Naive thymus-derived CD4-positive, alpha-beta T cell (primary cell): ENCODE measurements at regions of chr11 and their contacts with region 1.

Region 1: DNA sequence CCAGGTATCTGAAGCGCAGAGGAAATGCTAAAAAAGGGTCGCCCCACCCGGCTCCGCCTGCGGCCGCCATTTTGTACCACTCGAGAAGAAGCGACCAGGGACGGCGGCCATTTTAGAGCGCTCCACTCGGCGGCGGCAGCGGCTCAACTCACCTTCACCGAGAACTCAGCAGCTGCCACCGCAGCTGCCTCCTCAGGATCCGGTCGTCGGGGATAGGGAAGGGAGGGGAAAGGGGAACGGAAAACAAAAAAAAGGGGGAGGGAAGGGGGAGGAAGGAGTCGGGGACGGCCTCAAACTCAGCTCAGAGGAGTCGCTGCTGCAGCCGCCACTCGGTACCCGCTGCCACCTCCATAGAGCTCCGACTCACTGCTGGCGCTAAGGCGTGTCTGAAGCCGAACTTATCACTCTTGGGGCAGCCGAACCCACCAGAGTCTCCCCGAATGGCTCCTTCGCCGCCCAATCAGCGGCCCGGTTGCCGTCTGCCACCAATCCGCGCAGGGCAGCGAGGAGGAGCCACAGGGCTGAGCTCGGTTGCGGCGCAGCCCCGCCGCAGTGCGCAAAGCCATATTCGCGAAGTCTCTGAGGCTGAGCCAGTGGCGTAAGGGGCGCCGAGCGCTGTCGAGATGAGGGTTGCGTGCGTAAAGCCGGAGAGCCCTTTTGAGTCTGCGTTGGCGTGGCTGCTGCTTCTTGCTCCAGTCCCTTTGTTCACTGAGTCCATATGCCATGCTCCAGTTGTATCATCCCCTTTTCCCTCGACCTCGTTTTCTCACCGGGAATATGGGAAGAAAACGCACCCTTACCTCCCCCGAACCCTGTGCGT is at the start of gene EIF4G2:
- DNase-seq: peak; percentile 97 to 99 (median 99)
- ATAC-seq: peak; percentile 95
- H3K4me3 ChIP-seq: peak within 1 kb of the TSS; percentile 98
- H3K4me3 Mint-ChIP-seq: peak within 1 kb of the TSS; percentile 93 to 98 (median 97)
- H3K27ac ChIP-seq: peak within 1 kb of the TSS; percentile 95
- H3K27ac Mint-ChIP-seq: peak within 1 kb of the TSS; percentile 95 to 99 (median 98)
- H3K4me1 ChIP-seq: peaks cover 29 to 37% of the 10 kb centered on the region in 2 donors
- H3K4me1 Mint-ChIP-seq: peaks cover 25 to 53% (median 43%) of the 10 kb centered on the region in 7 donors
- H3K27me3 ChIP-seq: no peaks in the 10 kb centered on the region
- H3K27me3 Mint-ChIP-seq: peaks cover 0 to 5% (median 0%) of the 10 kb centered on the region in 5 donors
- total RNA-seq, gene EIF4G2: 596 to 843 (median 720) TPM

Region 2: GRCh38 chr11:10455637-10456487 is 352.9 kb before region 1 on chr11:
- CTCF ChIA-PET with region 1: no interaction called
- POLR2A ChIA-PET with region 1: interaction called, 10 read pairs
- intact Hi-C with region 1: loop called (anchors 2 to 5 kb)
- DNase-seq: peak; percentile 45 to 85 (median 77)
- ATAC-seq: peak; percentile 71
- H3K4me3 ChIP-seq: peak overlapping the region; percentile 55
- H3K4me3 Mint-ChIP-seq: peak overlapping the region; percentile 78 to 96 (median 92)
- H3K27ac ChIP-seq: peak overlapping the region; percentile 75
- H3K27ac Mint-ChIP-seq: peak overlapping the region; percentile 87 to 98 (median 94)
- H3K4me1 ChIP-seq: peaks cover 62 to 67% of the 10 kb centered on the region in 2 donors
- H3K4me1 Mint-ChIP-seq: peaks cover 72 to 92% (median 90%) of the 10 kb centered on the region in 7 donors
- H3K27me3 ChIP-seq: no peaks in the 10 kb centered on the region
- H3K27me3 Mint-ChIP-seq: peaks cover 0 to 9% (median 0%) of the 10 kb centered on the region in 5 donors

Region 3: GRCh38 chr11:10792398-10792975 is 16.3 kb before region 1 on chr11:
- CTCF ChIA-PET with region 1: interaction called, 18 read pairs
- POLR2A ChIA-PET with region 1: interaction called, 88 read pairs
- intact Hi-C with region 1: loop called (anchors 1 kb)
- DNase-seq: peak; percentile 58 to 90 (median 77)
- ATAC-seq: peak; percentile 89
- H3K4me3 ChIP-seq: peak overlapping the region; percentile 40
- H3K4me3 Mint-ChIP-seq: peak overlapping the region in 6 of 10 donors; percentile 1 to 37 (median 16)
- H3K27ac ChIP-seq: no peak overlapping the region
- H3K27ac Mint-ChIP-seq: peak overlapping the region in 2 of 9 donors; percentile 15 to 24
- H3K4me1 ChIP-seq: peaks cover 4 to 20% of the 10 kb centered on the region in 2 donors
- H3K4me1 Mint-ChIP-seq: peaks cover 14 to 26% (median 23%) of the 10 kb centered on the region in 7 donors
- H3K27me3 ChIP-seq: no peaks in the 10 kb centered on the region
- H3K27me3 Mint-ChIP-seq: peaks cover 0 to 23% (median 8%) of the 10 kb centered on the region in 5 donors

Region 4: GRCh38 chr11:10838083-10838482 is 29.3 kb after region 1 on chr11:
- CTCF ChIA-PET with region 1: interaction called, 6 read pairs
- POLR2A ChIA-PET with region 1: interaction called, 49 read pairs
- intact Hi-C with region 1: no loop called
- DNase-seq: no peak
- ATAC-seq: no peak
- H3K4me3 ChIP-seq: no peak overlapping the region
- H3K4me3 Mint-ChIP-seq: no peak overlapping the region
- H3K27ac ChIP-seq: no peak overlapping the region
- H3K27ac Mint-ChIP-seq: no peak overlapping the region
- H3K4me1 ChIP-seq: no peaks in the 10 kb centered on the region
- H3K4me1 Mint-ChIP-seq: peaks cover 3 to 9% (median 5%) of the 10 kb centered on the region in 7 donors
- H3K27me3 ChIP-seq: no peaks in the 10 kb centered on the region
- H3K27me3 Mint-ChIP-seq: no peaks in the 10 kb centered on the region

Region 5: DNA sequence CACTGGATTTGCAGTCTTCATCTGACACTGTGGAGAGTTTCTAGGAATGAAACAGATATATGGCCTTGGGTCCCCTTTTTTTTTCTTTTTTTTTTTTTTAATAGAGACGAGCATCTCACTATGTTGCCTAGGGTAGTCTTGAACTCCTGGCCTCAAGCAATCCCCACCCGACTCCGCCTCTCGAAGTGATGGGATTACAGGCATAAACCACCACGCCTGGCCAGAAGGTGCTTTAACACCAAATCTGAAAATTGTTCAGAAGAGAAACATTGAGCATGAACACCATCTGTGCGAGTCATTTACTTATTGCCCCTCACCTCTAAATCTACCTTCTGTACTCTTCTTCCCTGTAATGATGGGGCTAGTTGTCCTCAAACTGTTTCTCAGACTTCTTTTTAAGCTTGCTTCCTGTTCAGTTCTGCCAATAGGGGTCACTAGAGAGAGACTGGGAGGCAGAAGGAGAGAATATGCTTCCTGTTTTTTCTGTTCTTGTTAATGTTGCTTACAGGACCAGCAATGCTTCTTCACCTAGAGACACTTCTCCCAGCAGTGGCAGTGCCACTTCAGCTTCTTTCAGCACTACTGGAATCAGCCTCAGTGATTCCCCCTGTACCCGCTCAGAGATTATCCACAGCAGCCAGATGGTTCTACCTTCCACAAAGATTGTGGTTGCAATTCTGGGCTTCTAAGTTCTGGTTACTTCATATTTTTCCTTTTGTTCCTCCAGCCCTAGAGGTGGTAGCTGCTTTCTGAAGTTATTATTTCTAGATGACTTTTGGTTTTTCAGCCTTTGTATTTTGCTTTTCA is 69.8 kb after region 1 on chr11:
- CTCF ChIA-PET with region 1: interaction called, 4 read pairs
- POLR2A ChIA-PET with region 1: interaction called, 25 read pairs
- intact Hi-C with region 1: loop called in 1 of 2 experiments (anchors 1 kb)
- DNase-seq: peak in 7 of 9 donors; percentile 52 to 69 (median 62)
- ATAC-seq: peak; percentile 89
- H3K4me3 ChIP-seq: no peak overlapping the region
- H3K4me3 Mint-ChIP-seq: no peak overlapping the region
- H3K27ac ChIP-seq: no peak overlapping the region
- H3K27ac Mint-ChIP-seq: peak overlapping the region in 8 of 9 donors; percentile 16 to 75 (median 50)
- H3K4me1 ChIP-seq: peaks cover 5 to 6% of the 10 kb centered on the region in 2 donors
- H3K4me1 Mint-ChIP-seq: peaks cover 7 to 27% (median 23%) of the 10 kb centered on the region in 7 donors
- H3K27me3 ChIP-seq: no peaks in the 10 kb centered on the region
- H3K27me3 Mint-ChIP-seq: no peaks in the 10 kb centered on the region

Region 6: DNA sequence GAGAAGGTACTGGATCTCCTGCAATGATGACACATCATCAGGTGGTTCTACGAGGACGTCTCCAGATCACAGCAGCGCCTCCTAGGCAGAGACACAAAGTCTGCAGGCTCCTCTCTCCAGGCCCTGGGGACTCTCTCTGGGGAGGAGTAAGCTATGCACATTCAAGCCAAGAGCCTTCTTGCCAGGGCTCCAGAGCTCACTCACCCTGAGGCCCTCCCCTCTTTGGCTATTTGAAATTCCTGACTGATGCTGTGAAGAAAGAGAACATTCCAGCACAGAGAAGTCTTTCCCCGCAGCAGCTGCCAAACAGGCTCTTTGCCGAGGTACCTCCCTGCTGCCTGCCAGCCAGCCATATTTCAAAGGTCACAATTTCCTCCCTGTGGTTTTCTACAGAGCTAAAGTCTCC is 339.3 kb after region 1 on chr11:
- CTCF ChIA-PET with region 1: no interaction called
- POLR2A ChIA-PET with region 1: interaction called, 29 read pairs
- intact Hi-C with region 1: loop called in 1 of 2 experiments (anchors 1 kb)
- DNase-seq: peak in 7 of 9 donors; percentile 29 to 43 (median 35)
- ATAC-seq: no peak
- H3K4me3 ChIP-seq: no peak overlapping the region
- H3K4me3 Mint-ChIP-seq: peak overlapping the region in 9 of 10 donors; percentile 20 to 84 (median 70)
- H3K27ac ChIP-seq: peak overlapping the region; percentile 87
- H3K27ac Mint-ChIP-seq: peak overlapping the region in 8 of 9 donors; percentile 93 to 99 (median 98)
- H3K4me1 ChIP-seq: peaks cover 31 to 61% of the 10 kb centered on the region in 2 donors
- H3K4me1 Mint-ChIP-seq: peaks cover 32 to 74% (median 70%) of the 10 kb centered on the region in 7 donors
- H3K27me3 ChIP-seq: no peaks in the 10 kb centered on the region
- H3K27me3 Mint-ChIP-seq: peaks cover 0 to 2% (median 0%) of the 10 kb centered on the region in 5 donors